Activated T-helper 1 cell treated with anti-CD3 and anti-CD28 coated beads, Interleukin-12 subunit alpha, Interleukin-12 subunit beta, Interleukin-2, Interleukin-4 antibody, amounts not matched to agents 30 ng/mL and 10 ng/mL and 1 ng/mL, durations not matched to agents 14 hours and 24 hours and 36 hours (primary cell): ENCODE measurements at regions of chr10 and their contacts with region 1.

Region 1: DNA sequence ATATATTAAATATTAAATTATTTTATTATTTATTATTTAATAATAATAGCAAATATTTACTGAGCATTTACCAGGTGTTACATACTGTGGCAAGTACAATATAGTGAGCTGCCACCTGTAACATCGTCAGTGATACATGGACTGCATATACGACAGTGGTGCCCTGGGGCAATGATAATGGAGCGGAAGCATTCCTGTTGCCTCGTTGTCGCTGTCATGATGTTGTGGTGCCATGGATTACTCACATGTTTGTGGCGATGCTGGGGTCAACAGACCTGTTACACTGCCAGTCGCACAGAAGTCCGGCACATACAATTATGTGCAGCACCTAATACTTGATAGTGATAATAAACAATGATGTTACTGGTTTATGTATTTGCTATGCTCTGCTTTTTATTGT is 20.6 kb downstream of the CAMK1D start:
- DNase-seq: no peak
- H3K4me3 Mint-ChIP-seq: no peak overlapping the region
- H3K27ac Mint-ChIP-seq: no peak overlapping the region
- H3K4me1 Mint-ChIP-seq: peaks cover 18% of the 10 kb centered on the region
- H3K27me3 Mint-ChIP-seq: no peaks in the 10 kb centered on the region

Region 2: GRCh38 chr10:11946652-11947051 is 423.3 kb before region 1 on chr10:
- intact Hi-C with region 1: no loop called
- DNase-seq: no peak
- H3K4me3 Mint-ChIP-seq: no peak overlapping the region
- H3K27ac Mint-ChIP-seq: no peak overlapping the region
- H3K4me1 Mint-ChIP-seq: peaks cover 12% of the 10 kb centered on the region
- H3K27me3 Mint-ChIP-seq: no peaks in the 10 kb centered on the region

Region 3: GRCh38 chr10:12405342-12406320 is 35.6 kb after region 1 on chr10:
- intact Hi-C with region 1: loop called (anchors 1 kb)
- DNase-seq: no peak
- H3K4me3 Mint-ChIP-seq: no peak overlapping the region
- H3K27ac Mint-ChIP-seq: peak overlapping the region; percentile 15
- H3K4me1 Mint-ChIP-seq: peaks cover 40% of the 10 kb centered on the region
- H3K27me3 Mint-ChIP-seq: peaks cover 18% of the 10 kb centered on the region

Region 4: GRCh38 chr10:12419262-12419847 is 49.4 kb after region 1 on chr10:
- intact Hi-C with region 1: loop called (anchors 1 kb)
- DNase-seq: peak; percentile 25
- H3K4me3 Mint-ChIP-seq: peak overlapping the region; percentile 5
- H3K27ac Mint-ChIP-seq: peak overlapping the region; percentile 58
- H3K4me1 Mint-ChIP-seq: peaks cover 18% of the 10 kb centered on the region
- H3K27me3 Mint-ChIP-seq: peaks cover under 1% of the 10 kb centered on the region